H1 (cell line): ENCODE measurements at regions of chr7 and their contacts with region 1.

Region 1: GRCh38 chr7:19491821-19492452 is 216.9 kb downstream of the POLR1F start:
- DNase-seq: no peak
- H3K4me3 ChIP-seq: no peak overlapping the region
- H3K27ac ChIP-seq: no peak overlapping the region
- H3K4me1 ChIP-seq: no peaks in the 10 kb centered on the region
- H3K27me3 ChIP-seq: no peaks in the 10 kb centered on the region
- CTCF ChIP-seq: peak in 1 of 3 experiments; percentile 47; a peak in 2 of 4 replicates
- EP300 ChIP-seq: no peak
- POLR2A ChIP-seq: no peak
- RAD21 ChIP-seq: peak in 1 of 2 experiments; percentile 29; a peak in 3 of 4 replicates

Region 2: DNA sequence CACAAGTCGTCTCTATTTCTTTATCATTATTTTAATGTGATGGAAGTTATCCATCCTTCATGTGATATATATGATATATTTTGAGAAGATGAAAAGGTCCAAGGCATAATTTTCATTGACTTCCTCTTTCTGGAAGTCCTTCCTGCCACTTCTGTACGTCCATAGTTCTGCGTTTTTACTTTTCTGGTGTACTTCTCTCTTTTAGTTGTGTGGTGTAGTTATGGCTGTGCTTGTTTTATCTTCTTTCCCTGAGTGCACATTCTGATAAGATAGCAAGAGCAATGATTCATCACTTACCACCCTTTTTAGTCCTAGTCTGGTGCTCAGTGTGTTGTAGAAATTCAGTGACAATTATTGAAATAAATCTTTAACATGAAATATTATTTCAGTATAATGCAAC is 115.4 kb before region 1 on chr7:
- CTCF ChIA-PET with region 1: no interaction called
- POLR2A ChIA-PET with region 1: no interaction called
- DNase-seq: no peak
- H3K4me3 ChIP-seq: no peak overlapping the region
- H3K27ac ChIP-seq: no peak overlapping the region
- H3K4me1 ChIP-seq: no peaks in the 10 kb centered on the region; a peak in 1 of 7 replicates
- H3K27me3 ChIP-seq: no peaks in the 10 kb centered on the region
- CTCF ChIP-seq: no peak
- EP300 ChIP-seq: no peak
- POLR2A ChIP-seq: no peak
- RAD21 ChIP-seq: no peak

Region 3: GRCh38 chr7:19480383-19480782 is 11.6 kb before region 1 on chr7:
- CTCF ChIA-PET with region 1: interaction called, 14 read pairs
- POLR2A ChIA-PET with region 1: no interaction called
- DNase-seq: no peak
- H3K4me3 ChIP-seq: no peak overlapping the region
- H3K27ac ChIP-seq: no peak overlapping the region
- H3K4me1 ChIP-seq: no peaks in the 10 kb centered on the region
- H3K27me3 ChIP-seq: no peaks in the 10 kb centered on the region
- CTCF ChIP-seq: no peak
- EP300 ChIP-seq: no peak
- POLR2A ChIP-seq: no peak
- RAD21 ChIP-seq: no peak